ACHN (cell line): ENCODE measurements at regions of chr9 and their contacts with region 1.

Region 1: DNA sequence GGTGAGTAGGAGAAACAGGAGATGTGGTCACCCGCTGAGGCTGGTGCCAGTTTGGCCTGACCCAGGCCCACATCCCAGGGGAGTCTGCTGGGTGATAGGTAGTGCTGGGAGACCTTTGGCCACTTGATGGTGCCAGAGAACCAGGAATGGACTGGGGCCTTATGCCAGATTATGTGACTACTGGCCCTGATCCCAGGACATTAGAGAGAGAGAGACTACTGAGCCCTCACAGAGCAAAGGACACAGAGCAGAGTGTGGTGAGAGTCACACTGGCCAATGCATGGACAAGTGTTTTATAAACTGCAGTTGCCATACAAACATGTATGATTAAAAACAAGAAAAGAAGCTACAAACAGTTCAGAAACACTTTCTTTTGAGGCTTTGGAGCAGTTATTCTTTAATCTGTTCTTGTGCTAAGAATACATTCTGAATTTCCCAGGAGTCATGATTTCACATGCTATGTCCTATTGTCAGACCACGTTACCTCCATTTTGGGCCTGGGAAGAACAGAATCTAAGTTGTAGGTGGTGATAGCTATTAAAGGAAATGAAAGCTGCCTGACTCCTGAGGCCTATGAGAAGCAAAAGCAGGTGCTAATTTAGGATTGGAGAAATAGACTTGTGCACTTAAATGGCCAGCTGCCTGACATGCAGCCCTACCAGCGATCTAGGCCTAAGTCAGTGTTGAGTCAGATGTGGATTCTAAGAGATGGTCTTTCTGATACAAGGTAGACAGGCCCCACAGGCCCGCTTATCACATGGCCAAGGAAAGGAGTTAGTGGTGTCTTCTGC is 32.6 kb upstream of the TMOD1 start:
- DNase-seq: peak; percentile 52

Region 2: GRCh38 chr9:97615439-97616072 is 146.7 kb after region 1 on chr9:
- in situ Hi-C with region 1: loop called (anchors 25 kb)
- DNase-seq: peak; percentile 61

Region 3: DNA sequence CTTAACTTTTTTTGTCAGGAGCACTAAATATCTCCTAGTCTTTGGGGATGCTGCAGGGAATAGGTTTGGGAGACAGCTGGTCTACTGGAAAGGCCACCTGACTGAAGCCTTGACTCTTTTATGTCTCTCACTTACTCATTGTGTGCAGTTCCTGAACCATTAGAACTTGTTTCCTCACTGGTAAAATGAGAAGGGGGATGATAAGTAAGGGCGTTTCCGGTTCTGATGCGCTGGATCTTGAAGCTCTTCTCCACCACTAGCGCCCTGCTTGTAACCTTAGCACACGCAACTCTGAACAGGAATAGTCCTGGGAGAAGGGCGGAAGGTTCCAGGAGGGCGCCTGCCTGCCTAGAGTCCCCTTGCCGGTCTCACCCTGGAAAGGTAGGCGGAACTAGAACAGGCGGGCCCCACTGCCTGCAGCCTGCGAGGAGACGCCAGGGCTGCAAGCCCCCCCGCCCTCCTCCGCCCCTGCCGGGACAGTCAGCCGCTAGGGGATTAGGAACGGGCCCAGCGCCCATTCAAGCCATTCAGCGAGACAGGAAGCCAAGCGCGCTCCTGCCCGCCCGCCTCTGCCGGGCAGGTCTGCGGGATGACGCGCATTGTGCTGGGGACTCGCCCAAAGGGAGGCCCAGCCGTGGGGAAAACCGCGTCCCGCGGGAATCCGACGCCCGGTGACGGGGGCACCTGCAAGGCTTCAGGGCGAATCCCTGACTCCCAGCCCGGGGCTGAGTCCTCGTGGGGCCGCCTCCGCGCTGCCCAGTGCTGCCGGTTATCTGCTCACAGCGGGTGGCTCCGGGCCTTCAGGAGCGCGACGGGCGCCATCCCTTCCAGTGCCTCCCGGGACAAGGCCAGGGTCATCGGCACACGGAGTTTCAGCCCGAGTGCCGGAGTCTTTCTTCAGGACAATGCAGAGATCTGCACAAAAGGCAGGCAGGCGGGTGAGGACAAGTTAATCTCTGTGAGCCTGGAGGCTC is 272.3 kb after region 1 on chr9:
- in situ Hi-C with region 1: no loop called
- DNase-seq: no peak